Panc1 (cell line): ENCODE measurements at regions of chr5 and their contacts with region 1.

Region 1: DNA sequence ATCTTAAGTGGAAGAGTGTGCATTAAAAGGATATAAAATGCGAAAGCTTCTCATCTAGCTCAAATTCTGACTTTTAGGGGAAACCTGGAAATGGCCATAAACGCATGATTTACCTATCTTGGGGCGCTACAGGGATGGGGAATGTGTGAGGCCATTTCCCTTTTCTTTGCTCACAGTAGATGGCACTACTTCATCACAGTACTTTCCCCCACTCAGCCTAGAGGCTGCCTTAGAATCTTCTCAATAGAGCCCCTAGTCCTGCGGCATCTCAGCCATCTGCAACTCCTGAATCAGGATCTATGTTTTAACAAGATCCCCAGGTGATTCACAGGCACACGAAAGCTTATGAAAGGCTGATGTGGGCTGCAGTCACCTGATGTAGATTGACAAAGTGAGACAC is 110.8 kb downstream of the LHFPL2 start:
- DNase-seq: no peak
- ATAC-seq: peak; percentile 82
- H3K4me3 ChIP-seq: no peak overlapping the region
- H3K27ac ChIP-seq: no peak overlapping the region
- H3K4me1 ChIP-seq: no peaks in the 10 kb centered on the region
- H3K27me3 ChIP-seq: no peaks in the 10 kb centered on the region
- CTCF ChIP-seq: peak; percentile 66

Region 2: DNA sequence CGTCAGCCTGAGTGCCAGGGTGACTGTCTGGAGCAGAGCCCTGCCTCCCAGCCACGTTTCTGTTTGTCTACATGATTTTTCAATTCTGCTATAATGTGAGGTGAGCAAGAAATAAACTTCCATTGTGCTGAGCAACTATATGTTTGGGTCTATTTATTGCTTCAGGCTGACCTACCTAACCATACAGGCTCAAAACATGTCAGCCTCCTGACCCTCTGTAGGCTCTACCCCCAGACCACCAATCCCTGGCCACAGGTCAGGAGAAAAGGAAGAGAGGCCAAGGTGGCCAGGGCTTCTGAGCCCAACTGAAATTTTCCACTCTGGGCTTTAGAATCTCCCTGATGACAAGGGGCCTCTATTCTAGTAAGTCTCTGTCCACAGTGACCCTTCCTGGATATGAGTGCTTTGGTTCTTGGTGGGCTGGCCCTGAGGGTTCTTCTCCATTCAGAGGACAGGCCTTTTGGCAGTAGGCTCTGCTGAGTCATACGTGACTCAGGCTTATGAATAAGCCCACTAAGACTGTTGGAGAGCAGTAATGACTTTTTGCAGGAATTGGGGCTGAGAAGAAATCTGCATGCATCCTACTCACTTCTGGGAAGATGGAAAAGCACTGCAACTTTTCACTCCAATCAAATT is 644.5 kb before region 1 on chr5:
- CTCF ChIA-PET with region 1: no interaction called
- POLR2A ChIA-PET with region 1: no interaction called
- in situ Hi-C with region 1: no loop called
- intact Hi-C with region 1: no loop called
- DNase-seq: peak; percentile 57
- ATAC-seq: peak; percentile 97
- H3K4me3 ChIP-seq: no peak overlapping the region
- H3K27ac ChIP-seq: peak overlapping the region; percentile 49
- H3K4me1 ChIP-seq: peaks cover 22% of the 10 kb centered on the region
- H3K27me3 ChIP-seq: no peaks in the 10 kb centered on the region
- CTCF ChIP-seq: no peak

Region 3: GRCh38 chr5:78610163-78610583 is 72.4 kb after region 1 on chr5:
- CTCF ChIA-PET with region 1: no interaction called
- POLR2A ChIA-PET with region 1: no interaction called
- in situ Hi-C with region 1: no loop called
- intact Hi-C with region 1: no loop called
- DNase-seq: no peak
- ATAC-seq: no peak
- H3K4me3 ChIP-seq: no peak overlapping the region
- H3K27ac ChIP-seq: no peak overlapping the region
- H3K4me1 ChIP-seq: peaks cover 7% of the 10 kb centered on the region; the same call in 1 of the 2 replicates
- H3K27me3 ChIP-seq: no peaks in the 10 kb centered on the region
- CTCF ChIP-seq: no peak

Region 4: GRCh38 chr5:78638423-78638822 is 100.6 kb after region 1 on chr5:
- CTCF ChIA-PET with region 1: no interaction called
- POLR2A ChIA-PET with region 1: no interaction called
- in situ Hi-C with region 1: no loop called
- intact Hi-C with region 1: loop called (anchors 10 kb)
- DNase-seq: peak; percentile 92
- ATAC-seq: peak; percentile 93
- H3K4me3 ChIP-seq: peak overlapping the region in 1 of 2 experiments; percentile 7; a peak in 1 of 4 replicates
- H3K27ac ChIP-seq: peak overlapping the region; percentile 80
- H3K4me1 ChIP-seq: peaks cover 47% of the 10 kb centered on the region
- H3K27me3 ChIP-seq: no peaks in the 10 kb centered on the region
- CTCF ChIP-seq: no peak

Region 5: DNA sequence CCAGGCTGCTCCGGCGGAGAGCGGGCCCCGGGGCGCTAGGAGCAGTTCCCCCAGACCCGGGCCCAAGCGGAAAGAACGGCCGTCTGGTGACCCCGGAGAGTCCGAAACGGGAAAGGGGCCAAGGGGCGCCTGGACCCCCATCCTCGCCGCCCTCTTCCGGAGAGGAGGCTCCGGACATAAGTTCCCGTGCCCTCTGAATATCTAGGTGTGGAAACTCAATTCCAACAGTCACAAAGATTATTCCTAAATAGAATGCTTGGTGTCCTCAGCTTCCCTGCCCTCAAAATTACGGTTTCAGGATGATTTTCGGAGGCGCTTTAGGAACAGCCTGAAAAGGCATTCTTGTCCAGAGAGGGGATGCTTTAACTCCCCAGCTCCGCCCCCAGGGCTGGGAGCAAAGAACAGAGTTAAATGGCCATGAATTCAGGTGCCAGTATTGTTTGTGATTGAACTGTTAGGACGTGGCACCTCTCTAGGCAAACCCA is 111.4 kb after region 1 on chr5:
- CTCF ChIA-PET with region 1: no interaction called
- POLR2A ChIA-PET with region 1: no interaction called
- in situ Hi-C with region 1: no loop called
- intact Hi-C with region 1: no loop called
- DNase-seq: no peak
- ATAC-seq: peak; percentile 40
- H3K4me3 ChIP-seq: peak overlapping the region; percentile 72 to 88
- H3K27ac ChIP-seq: peak overlapping the region; percentile 65
- H3K4me1 ChIP-seq: peaks cover 23% of the 10 kb centered on the region
- H3K27me3 ChIP-seq: no peaks in the 10 kb centered on the region; the same call in 1 of the 2 replicates
- CTCF ChIP-seq: no peak

Region 6: GRCh38 chr5:78886341-78887230 is 348.8 kb after region 1 on chr5:
- CTCF ChIA-PET with region 1: no interaction called
- POLR2A ChIA-PET with region 1: no interaction called
- in situ Hi-C with region 1: no loop called
- intact Hi-C with region 1: loop called (anchors 10 kb)
- DNase-seq: no peak
- ATAC-seq: no peak
- H3K4me3 ChIP-seq: no peak overlapping the region
- H3K27ac ChIP-seq: no peak overlapping the region
- H3K4me1 ChIP-seq: no peaks in the 10 kb centered on the region
- H3K27me3 ChIP-seq: no peaks in the 10 kb centered on the region
- CTCF ChIP-seq: peak; percentile 75